ENCODE measurements at regions of chr2 and their contacts with region 1.

Region 1: GRCh38 chr2:53767405-53768241 is at the start of gene CHAC2:
- DNase-seq: peak; percentile 85 to 95 (median 94)
- H3K4me3 ChIP-seq: peak within 1 kb of the TSS; percentile 79 to 95 (median 87)
- H3K27ac ChIP-seq: peak within 1 kb of the TSS; percentile 77 to 90
- H3K4me1 ChIP-seq: peaks cover 3 to 23% (median 14%) of the 10 kb centered on the region in 4 experiments
- H3K27me3 ChIP-seq: no peaks in the 10 kb centered on the region

Region 2: DNA sequence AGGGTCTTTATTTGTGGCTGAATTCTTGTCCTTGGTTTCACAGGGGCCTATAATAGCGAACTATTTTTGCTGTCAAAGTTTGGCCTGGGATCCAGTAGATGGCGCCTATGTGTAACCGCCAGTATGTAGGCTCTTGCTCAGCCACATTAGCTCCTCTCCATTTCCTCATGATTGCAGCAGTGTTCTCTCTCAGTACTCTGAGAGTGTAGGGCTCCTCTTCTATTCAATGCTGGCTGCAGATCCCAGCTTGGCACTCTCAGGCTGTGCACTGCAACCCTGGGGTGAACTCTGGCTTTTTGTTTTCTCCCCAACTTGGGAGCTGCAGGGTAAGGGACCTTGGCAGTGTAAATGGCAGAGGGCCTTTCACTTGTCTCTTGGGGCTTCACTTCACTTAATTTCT is 344.6 kb before region 1 on chr2:
- CTCF ChIA-PET with region 1: no interaction called
- POLR2A ChIA-PET with region 1: no interaction called
- DNase-seq: peak in 2 of 3 donors; percentile 20 to 28
- H3K4me3 ChIP-seq: no peak overlapping the region
- H3K27ac ChIP-seq: no peak overlapping the region
- H3K4me1 ChIP-seq: no peaks in the 10 kb centered on the region
- H3K27me3 ChIP-seq: no peaks in the 10 kb centered on the region

Region 3: GRCh38 chr2:53778536-53779162 is 11.0 kb after region 1 on chr2:
- CTCF ChIA-PET with region 1: interaction called, 13 read pairs
- POLR2A ChIA-PET with region 1: interaction called, 7 read pairs
- DNase-seq: peak; percentile 19 to 75 (median 62)
- H3K4me3 ChIP-seq: no peak overlapping the region
- H3K27ac ChIP-seq: no peak overlapping the region
- H3K4me1 ChIP-seq: peaks cover 0 to 4% (median 2%) of the 10 kb centered on the region in 4 experiments
- H3K27me3 ChIP-seq: no peaks in the 10 kb centered on the region

Region 4: GRCh38 chr2:53786705-53787612 is 19.3 kb after region 1 on chr2 and contains the starts of genes ASB3 and ERLEC1:
- CTCF ChIA-PET with region 1: interaction called, 14 read pairs
- POLR2A ChIA-PET with region 1: interaction called, 22 read pairs
- DNase-seq: peak; percentile 93 to 98 (median 96)
- H3K4me3 ChIP-seq: peak within 1 kb of the TSS; percentile 73 to 100 (median 97)
- H3K27ac ChIP-seq: peak within 1 kb of the TSS; percentile 96
- H3K4me1 ChIP-seq: peaks cover 19 to 40% (median 32%) of the 10 kb centered on the region in 4 experiments
- H3K27me3 ChIP-seq: no peaks in the 10 kb centered on the region

Measured in common myeloid progenitor, CD34-positive (primary cell).